Breast epithelium (tissue), 4 donors: ENCODE measurements at regions of chr20 and their contacts with region 1.

Region 1: DNA sequence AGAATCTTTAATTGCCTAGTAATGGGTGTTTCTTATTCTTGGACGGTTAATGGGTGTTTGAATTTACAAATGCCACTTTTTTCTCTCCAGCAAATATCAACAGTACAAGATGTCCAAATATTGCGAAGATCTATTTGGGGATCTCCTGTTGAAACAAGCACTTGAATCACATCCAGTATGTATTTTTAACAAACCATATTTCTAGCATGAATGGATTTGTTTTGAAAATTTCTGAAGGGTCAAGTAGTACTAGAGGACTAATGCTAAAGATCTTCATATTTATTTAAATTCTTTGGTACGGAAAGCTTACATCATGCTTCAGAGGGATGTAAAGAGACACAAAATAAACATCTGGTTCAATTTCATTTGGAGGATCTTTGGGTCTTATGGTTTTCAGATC is 123.9 kb upstream of the LAMP5 start:
- DNase-seq: no peak
- H3K4me3 ChIP-seq: no peak overlapping the region
- H3K27ac ChIP-seq: no peak overlapping the region
- H3K4me1 ChIP-seq: no peaks in the 10 kb centered on the region
- H3K27me3 ChIP-seq: no peaks in the 10 kb centered on the region
- CTCF ChIP-seq: no peak
- POLR2A ChIP-seq: no peak

Region 2: GRCh38 chr20:9353180-9353915 is 37.1 kb before region 1 on chr20:
- intact Hi-C with region 1: loop called (anchors 2 kb)
- DNase-seq: no peak
- H3K4me3 ChIP-seq: no peak overlapping the region
- H3K27ac ChIP-seq: peak overlapping the region in 1 of 2 donors; percentile 19
- H3K4me1 ChIP-seq: no peaks in the 10 kb centered on the region
- H3K27me3 ChIP-seq: no peaks in the 10 kb centered on the region
- CTCF ChIP-seq: no peak
- POLR2A ChIP-seq: no peak

Region 3: GRCh38 chr20:9412309-9412708 is 21.9 kb after region 1 on chr20:
- intact Hi-C with region 1: no loop called
- DNase-seq: no peak
- H3K4me3 ChIP-seq: no peak overlapping the region
- H3K27ac ChIP-seq: no peak overlapping the region
- H3K4me1 ChIP-seq: no peaks in the 10 kb centered on the region
- H3K27me3 ChIP-seq: no peaks in the 10 kb centered on the region
- CTCF ChIP-seq: no peak
- POLR2A ChIP-seq: no peak